H1 (cell line): ENCODE measurements at regions of chr3 and their contacts with region 1.

Region 1: GRCh38 chr3:184543843-184544512 is 17.6 kb upstream of the EPHB3 start:
- DNase-seq: peak in 1 of 2 experiments; percentile 94
- H3K4me3 ChIP-seq: no peak overlapping the region
- H3K27ac ChIP-seq: no peak overlapping the region
- H3K4me1 ChIP-seq: peaks cover 0 to 5% (median under 1%) of the 10 kb centered on the region in 4 experiments; a peak in 3 of 7 replicates
- H3K27me3 ChIP-seq: peaks cover 0 to 3% (median 0%) of the 10 kb centered on the region in 4 experiments; a peak in 1 of 7 replicates
- CTCF ChIP-seq: peak; percentile 56 to 94 (median 81)
- EP300 ChIP-seq: no peak
- POLR2A ChIP-seq: no peak
- RAD21 ChIP-seq: peak; percentile 94 to 96

Region 2: GRCh38 chr3:184354121-184354728 is 189.8 kb before region 1 on chr3:
- CTCF ChIA-PET with region 1: interaction called, 47 read pairs
- POLR2A ChIA-PET with region 1: no interaction called
- DNase-seq: peak in 1 of 2 experiments; percentile 85
- H3K4me3 ChIP-seq: no peak overlapping the region
- H3K27ac ChIP-seq: no peak overlapping the region
- H3K4me1 ChIP-seq: peaks cover 0 to 7% (median 3%) of the 10 kb centered on the region in 4 experiments; a peak in 2 of 7 replicates
- H3K27me3 ChIP-seq: no peaks in the 10 kb centered on the region
- CTCF ChIP-seq: peak in 2 of 3 experiments; percentile 60 to 74; a peak in 3 of 4 replicates
- EP300 ChIP-seq: no peak
- POLR2A ChIP-seq: no peak
- RAD21 ChIP-seq: peak; percentile 37 to 58; a peak in 3 of 4 replicates

Region 3: GRCh38 chr3:184380191-184380626 is 163.8 kb before region 1 on chr3:
- CTCF ChIA-PET with region 1: interaction called, 223 read pairs
- POLR2A ChIA-PET with region 1: interaction called, 4 read pairs
- DNase-seq: peak in 1 of 2 experiments; percentile 79
- H3K4me3 ChIP-seq: peak overlapping the region; percentile 32 to 71 (median 54); a peak in 7 of 8 replicates
- H3K27ac ChIP-seq: no peak overlapping the region
- H3K4me1 ChIP-seq: peaks cover 0 to 33% (median 27%) of the 10 kb centered on the region in 4 experiments; a peak in 6 of 7 replicates
- H3K27me3 ChIP-seq: peaks cover 31 to 55% (median 49%) of the 10 kb centered on the region in 4 experiments
- CTCF ChIP-seq: no peak
- EP300 ChIP-seq: no peak
- POLR2A ChIP-seq: no peak
- RAD21 ChIP-seq: no peak

Region 4: DNA sequence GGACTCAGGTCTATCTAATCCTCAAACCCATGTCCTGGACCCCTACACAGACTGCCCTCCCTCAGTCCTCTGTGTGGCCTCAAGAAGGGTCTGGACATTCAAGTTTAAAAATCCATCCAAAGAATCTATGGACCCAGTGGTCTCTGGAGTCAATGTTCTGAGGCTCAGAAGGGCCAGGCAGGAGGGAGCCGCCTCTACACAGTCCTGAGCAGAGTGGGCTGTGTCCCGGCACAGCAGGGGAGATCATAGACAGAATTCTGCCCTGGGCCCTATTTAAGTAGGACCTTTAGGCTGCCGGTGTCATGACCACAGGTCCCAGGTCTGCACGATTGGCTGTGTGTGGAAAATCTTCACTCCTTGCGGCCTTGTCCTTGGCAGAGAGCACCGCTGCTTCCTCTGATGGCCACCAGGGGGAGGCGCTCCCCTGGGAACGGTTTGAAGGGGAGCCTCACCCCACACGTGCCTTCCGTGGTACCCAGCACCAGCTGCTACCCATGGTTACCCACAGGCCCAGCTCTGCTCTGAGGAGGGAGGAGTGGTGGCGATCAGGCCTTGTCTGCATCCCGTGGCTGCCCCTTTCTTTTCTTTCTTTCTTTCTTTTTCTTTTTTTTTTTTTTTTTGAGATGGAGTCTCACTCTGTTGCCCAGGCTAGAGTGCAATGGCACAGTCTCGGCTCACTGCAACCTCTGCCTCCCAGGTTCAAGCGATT is 126.2 kb before region 1 on chr3:
- CTCF ChIA-PET with region 1: interaction called, 83 read pairs
- POLR2A ChIA-PET with region 1: no interaction called
- DNase-seq: peak; percentile 19 to 84
- H3K4me3 ChIP-seq: no peak overlapping the region
- H3K27ac ChIP-seq: no peak overlapping the region
- H3K4me1 ChIP-seq: peaks cover 0 to 5% (median 4%) of the 10 kb centered on the region in 4 experiments; a peak in 2 of 7 replicates
- H3K27me3 ChIP-seq: no peaks in the 10 kb centered on the region
- CTCF ChIP-seq: peak; percentile 93 to 97 (median 96)
- EP300 ChIP-seq: no peak
- POLR2A ChIP-seq: no peak
- RAD21 ChIP-seq: peak; percentile 89 to 90

Region 5: GRCh38 chr3:184498986-184499606 is 44.9 kb before region 1 on chr3:
- CTCF ChIA-PET with region 1: interaction called, 10 read pairs
- POLR2A ChIA-PET with region 1: no interaction called
- DNase-seq: no peak
- H3K4me3 ChIP-seq: no peak overlapping the region
- H3K27ac ChIP-seq: no peak overlapping the region
- H3K4me1 ChIP-seq: peaks cover 0 to 6% (median 4%) of the 10 kb centered on the region in 4 experiments; a peak in 5 of 7 replicates
- H3K27me3 ChIP-seq: peaks cover 0 to 3% (median 2%) of the 10 kb centered on the region in 4 experiments; a peak in 2 of 7 replicates
- CTCF ChIP-seq: no peak
- EP300 ChIP-seq: no peak
- POLR2A ChIP-seq: no peak
- RAD21 ChIP-seq: no peak

Region 6: DNA sequence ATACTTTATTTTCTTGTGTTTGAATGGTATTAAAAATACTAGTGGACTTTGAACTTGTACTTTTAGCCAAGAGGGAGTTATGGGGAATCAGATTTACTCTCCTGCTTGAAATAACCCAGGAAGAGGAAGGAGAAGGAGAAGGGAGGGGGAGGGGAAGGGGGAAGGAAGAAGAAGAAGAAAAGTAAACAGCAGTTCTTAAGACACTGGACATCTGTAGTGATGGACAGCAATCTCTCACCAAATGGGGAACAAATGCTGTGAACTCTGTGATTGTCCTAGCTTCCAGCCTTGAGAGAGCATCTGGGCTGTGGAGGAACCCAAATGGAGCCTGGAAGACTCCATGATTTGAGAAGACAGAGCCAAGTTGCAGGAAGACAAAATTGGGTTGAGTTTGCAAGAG is 320.0 kb after region 1 on chr3:
- CTCF ChIA-PET with region 1: no interaction called
- POLR2A ChIA-PET with region 1: no interaction called
- DNase-seq: no peak
- H3K4me3 ChIP-seq: no peak overlapping the region
- H3K27ac ChIP-seq: no peak overlapping the region
- H3K4me1 ChIP-seq: no peaks in the 10 kb centered on the region
- H3K27me3 ChIP-seq: no peaks in the 10 kb centered on the region
- CTCF ChIP-seq: no peak
- EP300 ChIP-seq: no peak
- POLR2A ChIP-seq: no peak
- RAD21 ChIP-seq: no peak